ENCODE measurements at regions of chr4 and their contacts with region 1.

Region 1: GRCh38 chr4:22235698-22236097 is 280.2 kb downstream of the ADGRA3 start:
- DNase-seq: no peak

Region 2: GRCh38 chr4:22264261-22264660 is 28.6 kb after region 1 on chr4:
- intact Hi-C with region 1: loop called in 1 of 2 experiments (anchors 1 kb)
- DNase-seq: no peak

Measured in posterior vena cava (tissue), 2 donors.